Upper lobe of right lung (tissue), 1 donor: ENCODE measurements at regions of chr3 and their contacts with region 1.

Region 1: DNA sequence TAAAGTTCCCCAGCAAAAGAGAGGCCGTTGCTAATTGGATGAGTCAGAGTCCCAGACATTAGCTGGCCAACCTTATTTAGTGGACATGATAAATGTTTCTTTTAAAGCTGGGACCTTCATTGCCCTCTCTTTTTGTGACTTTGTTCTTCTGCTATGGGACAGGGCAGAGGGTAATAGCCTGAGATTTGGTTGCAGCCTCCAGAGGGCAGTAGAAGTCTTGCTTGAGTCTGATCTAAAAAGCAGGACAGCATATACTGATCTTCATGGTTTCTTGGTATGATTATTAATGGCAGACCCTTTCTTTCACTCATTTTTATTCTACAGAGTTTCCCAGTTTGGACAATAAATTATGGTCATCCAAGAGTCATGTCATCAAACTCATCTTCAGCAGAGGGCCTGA is 25.1 kb upstream of the ZKSCAN7 start:
- DNase-seq: no peak
- ATAC-seq: peak; percentile 47
- H3K4me3 ChIP-seq: no peak overlapping the region
- H3K27ac ChIP-seq: no peak overlapping the region
- H3K4me1 ChIP-seq: no peaks in the 10 kb centered on the region
- H3K27me3 ChIP-seq: peaks cover 23% of the 10 kb centered on the region
- CTCF ChIP-seq: no peak

Region 2: DNA sequence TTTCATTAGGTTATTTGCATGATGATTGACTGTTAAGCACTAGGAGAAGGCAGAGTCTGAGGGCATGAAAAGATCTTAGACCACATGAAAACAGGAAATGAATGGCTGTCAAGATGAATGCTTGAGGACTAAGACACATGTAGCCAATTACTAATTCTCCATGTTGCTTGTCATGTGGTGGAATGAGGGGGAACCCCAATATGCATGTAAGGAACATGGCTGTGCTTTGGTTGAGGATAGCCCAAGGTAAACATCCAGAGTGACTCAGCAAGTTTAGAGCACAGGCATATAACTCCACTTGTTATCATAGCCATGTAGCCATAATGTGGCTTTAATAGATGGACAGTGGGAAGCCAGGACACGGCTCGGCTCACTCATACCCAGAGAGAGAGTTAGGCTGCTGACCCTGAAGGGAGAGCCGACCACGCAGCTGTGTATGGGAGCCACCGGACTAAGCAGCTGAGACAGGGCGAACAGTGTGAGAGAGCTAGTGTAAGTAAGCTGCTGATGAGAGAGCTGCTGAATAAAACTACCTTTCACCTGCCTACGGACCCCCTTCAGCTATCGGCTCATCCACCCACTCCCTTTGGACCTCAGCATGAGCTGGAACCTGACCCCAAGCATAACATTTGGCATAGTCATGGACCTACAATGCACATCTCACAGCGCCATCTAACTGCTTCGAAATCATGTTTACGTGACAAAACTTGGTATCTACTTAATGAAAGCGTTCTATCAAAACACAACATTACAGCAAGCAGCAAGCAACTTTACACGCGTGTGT is 945.7 kb before region 1 on chr3:
- intact Hi-C with region 1: no loop called
- DNase-seq: no peak
- ATAC-seq: no peak
- H3K4me3 ChIP-seq: no peak overlapping the region
- H3K27ac ChIP-seq: no peak overlapping the region
- H3K4me1 ChIP-seq: no peaks in the 10 kb centered on the region
- H3K27me3 ChIP-seq: no peaks in the 10 kb centered on the region
- CTCF ChIP-seq: no peak

Region 3: DNA sequence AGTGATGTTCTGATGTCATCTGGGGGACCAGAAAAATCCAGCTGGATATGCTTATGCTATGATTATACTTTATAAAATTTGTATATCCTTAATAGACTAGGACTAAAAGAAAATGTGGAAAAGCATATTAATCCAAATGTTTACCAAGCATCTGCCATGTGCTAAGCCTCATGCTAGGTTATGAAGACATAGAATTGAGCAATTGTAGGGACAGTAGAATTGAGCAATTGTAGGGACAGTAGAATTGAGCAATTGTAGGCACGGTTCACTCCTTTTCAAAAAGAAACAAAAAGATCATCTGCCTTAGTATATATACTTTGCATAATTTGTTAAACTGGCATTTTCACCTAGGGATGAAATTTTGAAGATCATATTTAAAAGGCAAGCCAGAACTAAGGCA is 820.9 kb before region 1 on chr3:
- intact Hi-C with region 1: no loop called
- DNase-seq: no peak
- ATAC-seq: peak; percentile 64
- H3K4me3 ChIP-seq: no peak overlapping the region
- H3K27ac ChIP-seq: no peak overlapping the region
- H3K4me1 ChIP-seq: peaks cover 4% of the 10 kb centered on the region
- H3K27me3 ChIP-seq: no peaks in the 10 kb centered on the region
- CTCF ChIP-seq: no peak

Region 4: GRCh38 chr3:44923632-44924456 is 393.9 kb after region 1 on chr3:
- intact Hi-C with region 1: loop called (anchors 10 kb)
- DNase-seq: no peak
- ATAC-seq: no peak
- H3K4me3 ChIP-seq: no peak overlapping the region
- H3K27ac ChIP-seq: no peak overlapping the region
- H3K4me1 ChIP-seq: no peaks in the 10 kb centered on the region
- H3K27me3 ChIP-seq: no peaks in the 10 kb centered on the region
- CTCF ChIP-seq: no peak